Activated T-helper 2 cell treated with anti-CD3 and anti-CD28 coated beads, Interferon-gamma antibody, Interleukin-2, Interleukin-4, amounts not matched to agents 10 μg/mL and 5 μg/mL and 100 μg/mL, durations not matched to agents 14 hours and 24 hours and 36 hours (primary cell): ENCODE measurements at regions of chr3 and their contacts with region 1.

Region 1: GRCh38 chr3:104885214-104885814 is 481.4 kb upstream of the ALCAM start:
- DNase-seq: no peak
- H3K4me3 Mint-ChIP-seq: no peak overlapping the region
- H3K27ac Mint-ChIP-seq: no peak overlapping the region
- H3K4me1 Mint-ChIP-seq: no peaks in the 10 kb centered on the region
- H3K27me3 Mint-ChIP-seq: no peaks in the 10 kb centered on the region

Region 2: DNA sequence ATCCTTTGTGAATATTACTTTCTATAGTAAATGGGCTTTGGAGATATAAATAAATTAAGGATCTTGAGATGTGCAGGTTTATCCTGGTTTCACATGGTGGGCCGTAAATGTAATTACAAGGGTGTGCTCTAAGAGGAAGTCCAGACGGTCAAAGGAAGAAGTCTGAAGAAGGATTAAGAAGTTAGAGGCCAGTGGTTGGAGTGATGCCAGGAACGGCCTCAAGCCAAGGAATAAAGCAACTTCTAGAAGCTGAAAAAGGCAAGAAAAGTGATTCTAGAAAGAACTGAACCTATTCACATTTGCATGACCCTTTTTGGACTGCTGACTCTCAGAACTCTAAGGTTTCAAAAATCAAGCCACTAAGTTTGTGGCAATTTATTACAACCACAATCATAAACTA is 499.9 kb before region 1 on chr3:
- intact Hi-C with region 1: no loop called
- DNase-seq: no peak
- H3K4me3 Mint-ChIP-seq: no peak overlapping the region
- H3K27ac Mint-ChIP-seq: no peak overlapping the region
- H3K4me1 Mint-ChIP-seq: no peaks in the 10 kb centered on the region
- H3K27me3 Mint-ChIP-seq: no peaks in the 10 kb centered on the region

Region 3: GRCh38 chr3:104856743-104857142 is 28.6 kb before region 1 on chr3:
- intact Hi-C with region 1: loop called (anchors 1 kb)
- DNase-seq: no peak
- H3K4me3 Mint-ChIP-seq: no peak overlapping the region
- H3K27ac Mint-ChIP-seq: no peak overlapping the region
- H3K4me1 Mint-ChIP-seq: no peaks in the 10 kb centered on the region
- H3K27me3 Mint-ChIP-seq: no peaks in the 10 kb centered on the region

Region 4: GRCh38 chr3:104873331-104873730 is 12.0 kb before region 1 on chr3:
- intact Hi-C with region 1: no loop called
- DNase-seq: no peak
- H3K4me3 Mint-ChIP-seq: no peak overlapping the region
- H3K27ac Mint-ChIP-seq: no peak overlapping the region
- H3K4me1 Mint-ChIP-seq: no peaks in the 10 kb centered on the region
- H3K27me3 Mint-ChIP-seq: no peaks in the 10 kb centered on the region